Naive thymus-derived CD4-positive, alpha-beta T cell (primary cell): ENCODE measurements at regions of chr21 and their contacts with region 1.

Region 1: GRCh38 chr21:25457411-25457810 is 149.9 kb downstream of the MRPL39 start:
- DNase-seq: peak in 6 of 9 donors; percentile 11 to 49 (median 34)
- ATAC-seq: peak; percentile 95
- H3K4me3 ChIP-seq: peak overlapping the region; percentile 1
- H3K4me3 Mint-ChIP-seq: peak overlapping the region; percentile 65 to 91 (median 82)
- H3K27ac ChIP-seq: peak overlapping the region; percentile 40
- H3K27ac Mint-ChIP-seq: peak overlapping the region; percentile 81 to 91 (median 86)
- H3K4me1 ChIP-seq: peaks cover 0 to 5% of the 10 kb centered on the region in 2 donors
- H3K4me1 Mint-ChIP-seq: peaks cover 5 to 39% (median 24%) of the 10 kb centered on the region in 7 donors
- H3K27me3 ChIP-seq: no peaks in the 10 kb centered on the region
- H3K27me3 Mint-ChIP-seq: no peaks in the 10 kb centered on the region

Region 2: DNA sequence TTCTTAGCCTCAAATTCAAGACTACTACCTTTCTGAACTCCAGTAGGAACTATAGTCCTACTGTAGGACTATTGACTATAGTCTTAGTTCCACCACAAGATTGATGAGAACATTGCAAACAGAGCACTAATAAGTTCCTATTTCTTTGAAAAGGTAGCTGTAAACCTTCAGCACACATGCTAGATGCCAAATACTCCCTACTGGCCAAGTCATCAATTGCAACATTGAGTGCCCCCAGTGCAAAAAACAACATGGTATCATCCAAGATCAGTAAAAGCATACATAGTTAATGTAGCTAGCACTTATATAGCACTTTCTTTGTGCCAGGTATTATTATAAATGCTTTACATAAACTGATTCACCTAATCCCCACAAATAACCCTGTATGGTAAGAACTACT is 50.1 kb after region 1 on chr21:
- CTCF ChIA-PET with region 1: no interaction called
- POLR2A ChIA-PET with region 1: no interaction called
- intact Hi-C with region 1: loop called in 1 of 2 experiments (anchors 2 kb)
- DNase-seq: no peak
- ATAC-seq: no peak
- H3K4me3 ChIP-seq: no peak overlapping the region
- H3K4me3 Mint-ChIP-seq: no peak overlapping the region
- H3K27ac ChIP-seq: no peak overlapping the region
- H3K27ac Mint-ChIP-seq: no peak overlapping the region
- H3K4me1 ChIP-seq: no peaks in the 10 kb centered on the region
- H3K4me1 Mint-ChIP-seq: peaks cover 0 to 31% (median 0%) of the 10 kb centered on the region in 7 donors
- H3K27me3 ChIP-seq: no peaks in the 10 kb centered on the region
- H3K27me3 Mint-ChIP-seq: no peaks in the 10 kb centered on the region